Sciatic nerve (tissue), 2 donors: ENCODE measurements at regions of chr9 and their contacts with region 1.

Region 1: GRCh38 chr9:17776735-17777134 is 197.9 kb downstream of the SH3GL2 start:
- DNase-seq: no peak
- ATAC-seq: no peak

Region 2: DNA sequence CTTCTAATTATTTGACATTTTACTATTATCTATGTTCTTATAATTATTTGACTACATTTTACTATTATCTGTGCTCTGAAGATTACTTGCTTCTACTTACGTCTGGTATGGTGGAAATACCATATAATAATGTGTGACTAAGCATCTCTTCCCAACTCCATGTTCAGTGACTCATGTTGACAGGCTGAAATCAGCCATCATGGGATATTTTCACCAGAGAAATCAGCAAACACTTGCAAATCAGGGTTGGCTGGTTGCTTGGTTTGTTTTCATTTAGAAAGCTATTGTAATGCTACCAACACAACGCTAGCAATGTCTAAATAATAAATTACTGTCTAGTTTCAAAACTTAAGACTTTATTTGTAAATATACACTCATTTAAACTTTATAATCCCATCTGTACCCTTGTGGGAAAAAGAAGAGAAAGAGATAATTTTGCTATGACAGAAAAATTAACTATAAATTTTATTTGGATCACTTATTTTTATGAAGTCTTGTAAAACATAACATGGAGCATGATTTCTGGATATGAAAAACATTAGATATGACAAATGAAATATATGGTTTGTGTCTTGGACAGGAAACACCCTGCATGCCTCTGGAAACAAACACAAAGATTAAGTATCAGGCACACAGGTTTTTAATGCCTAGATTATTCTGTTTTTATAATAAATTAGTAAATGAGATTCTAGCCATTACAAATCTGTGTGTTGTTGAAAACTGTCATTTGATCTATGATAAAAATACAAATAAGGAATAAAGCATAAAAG is 1243.9 kb before region 1 on chr9:
- intact Hi-C with region 1: no loop called
- DNase-seq: no peak
- ATAC-seq: no peak

Region 3: GRCh38 chr9:17744786-17745185 is 31.9 kb before region 1 on chr9:
- intact Hi-C with region 1: loop called (anchors 1 kb)
- DNase-seq: no peak
- ATAC-seq: no peak